Right ventricle myocardium inferior (tissue), 1 donor: ENCODE measurements at regions of chr11 and their contacts with region 1.

Region 1: GRCh38 chr11:67658691-67659271 is 8.3 kb upstream of the ACY3 start:
- DNase-seq: no peak
- ATAC-seq: no peak

Region 2: GRCh38 chr11:67572747-67573419 is 85.9 kb before region 1 on chr11:
- intact Hi-C with region 1: loop called (anchors 2 kb)
- DNase-seq: no peak
- ATAC-seq: no peak

Region 3: DNA sequence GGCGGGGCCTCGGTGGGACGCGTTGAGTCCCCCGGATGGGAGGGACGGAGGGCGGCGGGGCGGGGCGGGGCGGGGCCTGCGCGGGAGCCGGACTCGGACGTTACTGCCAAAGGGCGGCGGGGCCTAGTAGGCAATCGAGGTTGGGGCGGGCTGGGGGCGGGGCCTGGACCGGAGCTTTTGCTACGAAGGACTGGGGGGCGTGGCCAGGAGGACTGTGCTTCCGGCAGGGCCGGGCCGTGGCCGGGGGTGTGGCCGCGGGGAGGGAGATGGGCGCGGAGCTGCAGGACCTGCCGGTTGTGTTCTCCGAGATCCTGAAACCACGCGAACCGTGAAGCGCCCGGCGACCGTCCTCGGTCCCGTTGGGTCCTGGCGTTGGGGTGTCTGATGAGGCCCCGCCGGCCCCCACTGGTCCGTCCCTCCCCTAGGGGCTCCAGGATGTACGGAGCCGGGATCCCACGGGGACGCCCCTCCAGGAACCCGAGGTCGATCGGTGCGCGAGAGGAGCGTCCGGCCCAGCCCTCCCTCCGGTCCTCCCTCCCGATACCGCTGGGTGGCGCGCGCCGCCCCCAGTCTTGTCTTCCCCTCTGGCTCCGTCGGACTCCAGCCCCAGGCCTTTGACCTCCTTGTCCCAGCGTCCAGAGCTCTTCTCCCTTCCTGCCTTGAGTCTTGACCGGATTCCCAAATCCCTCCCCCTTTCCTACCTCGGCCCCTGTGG is 28.4 kb before region 1 on chr11:
- intact Hi-C with region 1: loop called (anchors 2 kb)
- DNase-seq: peak; percentile 98
- ATAC-seq: peak; percentile 91